Posterior cingulate gyrus (tissue), 11 donors: ENCODE measurements at regions of chr5 and their contacts with region 1.

Region 1: DNA sequence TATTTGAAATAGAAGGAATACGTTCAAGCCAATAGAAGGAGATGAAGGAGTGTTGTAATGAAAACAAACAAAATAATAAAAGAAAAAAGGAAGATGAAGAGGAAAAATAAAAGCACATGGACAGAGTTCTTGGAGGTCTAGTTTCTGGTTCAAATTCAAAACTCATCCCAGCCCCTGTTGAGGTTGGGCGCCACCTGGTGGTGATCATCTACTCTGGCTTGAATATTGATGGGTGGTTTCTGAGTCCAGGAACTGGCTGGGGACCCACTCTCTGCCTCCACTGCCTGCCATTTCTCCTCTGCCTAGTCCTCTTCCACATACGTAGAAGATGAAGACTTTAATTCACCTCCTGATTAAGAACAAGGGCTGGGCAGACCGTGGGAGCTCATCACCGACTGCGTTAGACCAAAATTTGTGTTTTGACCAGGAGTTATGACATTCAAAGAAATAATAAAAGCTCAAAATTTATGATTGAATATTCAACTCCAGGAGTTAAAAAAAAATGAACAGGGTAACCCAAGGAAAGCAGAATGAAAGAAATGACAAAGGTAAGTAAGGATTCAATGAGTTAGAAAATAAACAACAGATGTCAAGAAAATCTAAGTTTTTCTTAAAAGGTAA is 99.0 kb upstream of the SLC1A3 start:
- DNase-seq: peak in 8 of 10 donors; percentile 42 to 92 (median 78)

Region 2: DNA sequence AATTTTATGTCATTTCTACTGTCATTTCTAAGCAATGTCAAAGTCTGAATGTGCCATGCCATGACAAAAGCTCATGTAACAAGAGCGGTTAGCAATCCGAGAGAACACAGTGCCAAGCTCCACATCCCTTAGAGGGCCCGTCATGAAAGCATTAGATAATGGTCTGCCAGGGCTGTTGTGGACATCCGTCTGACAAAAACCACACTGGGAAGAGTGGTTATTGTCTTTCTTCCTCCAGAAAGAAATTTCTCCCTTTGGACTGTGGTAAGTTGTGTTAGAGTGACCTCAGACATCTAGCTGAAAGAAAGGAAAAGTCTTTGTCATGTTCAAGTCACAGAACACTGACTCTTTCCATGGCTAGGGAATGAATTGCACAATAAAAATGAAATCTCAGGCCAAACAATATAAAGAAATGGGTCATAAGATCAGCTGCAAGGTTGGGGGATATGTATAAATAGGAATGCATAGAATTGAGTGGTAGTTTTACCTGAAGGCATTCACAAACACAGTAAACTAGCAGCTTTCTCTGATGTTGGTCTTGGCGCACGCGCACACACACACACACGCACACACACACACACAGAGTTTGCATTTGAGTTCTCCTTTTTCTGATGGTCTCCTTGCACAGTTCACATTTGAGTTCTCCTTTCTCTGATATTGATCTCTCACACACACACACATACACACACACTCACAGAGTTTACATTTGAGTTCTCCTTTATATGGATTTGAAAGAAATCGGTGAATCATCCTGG is 104.3 kb after region 1 on chr5:
- intact Hi-C with region 1: loop called (anchors 10 kb)
- DNase-seq: no peak